B cell (primary cell): ENCODE measurements at regions of chr10 and their contacts with region 1.

Region 1: GRCh38 chr10:44974628-44975431 is 3.8 kb downstream of the DEPP1 start:
- DNase-seq: peak; percentile 79
- ATAC-seq: peak; percentile 96
- H3K4me3 ChIP-seq: peak overlapping the region; percentile 31 to 70 (median 50)
- H3K4me3 Mint-ChIP-seq: peak overlapping the region; percentile 86
- H3K27ac ChIP-seq: no peak overlapping the region
- H3K27ac Mint-ChIP-seq: peak overlapping the region; percentile 73
- H3K4me1 ChIP-seq: peaks cover 20 to 37% of the 10 kb centered on the region in 2 donors
- H3K4me1 Mint-ChIP-seq: peaks cover 27% of the 10 kb centered on the region
- H3K27me3 ChIP-seq: peaks cover 0 to 9% (median 0%) of the 10 kb centered on the region in 4 experiments
- H3K27me3 Mint-ChIP-seq: no peaks in the 10 kb centered on the region
- CTCF ChIP-seq: peak; percentile 97

Region 2: GRCh38 chr10:43671656-43672531 is 1302.9 kb before region 1 on chr10:
- CTCF ChIA-PET with region 1: no interaction called
- POLR2A ChIA-PET with region 1: no interaction called
- intact Hi-C with region 1: loop called (anchors 2 kb)
- DNase-seq: peak; percentile 72
- ATAC-seq: peak; percentile 66
- H3K4me3 ChIP-seq: no peak overlapping the region
- H3K4me3 Mint-ChIP-seq: no peak overlapping the region
- H3K27ac ChIP-seq: no peak overlapping the region
- H3K27ac Mint-ChIP-seq: no peak overlapping the region
- H3K4me1 ChIP-seq: peaks cover 0 to 5% of the 10 kb centered on the region in 2 donors
- H3K4me1 Mint-ChIP-seq: peaks cover 2% of the 10 kb centered on the region
- H3K27me3 ChIP-seq: peaks cover 0 to 42% (median 4%) of the 10 kb centered on the region in 4 experiments
- H3K27me3 Mint-ChIP-seq: peaks cover 44% of the 10 kb centered on the region
- CTCF ChIP-seq: peak; percentile 85

Region 3: DNA sequence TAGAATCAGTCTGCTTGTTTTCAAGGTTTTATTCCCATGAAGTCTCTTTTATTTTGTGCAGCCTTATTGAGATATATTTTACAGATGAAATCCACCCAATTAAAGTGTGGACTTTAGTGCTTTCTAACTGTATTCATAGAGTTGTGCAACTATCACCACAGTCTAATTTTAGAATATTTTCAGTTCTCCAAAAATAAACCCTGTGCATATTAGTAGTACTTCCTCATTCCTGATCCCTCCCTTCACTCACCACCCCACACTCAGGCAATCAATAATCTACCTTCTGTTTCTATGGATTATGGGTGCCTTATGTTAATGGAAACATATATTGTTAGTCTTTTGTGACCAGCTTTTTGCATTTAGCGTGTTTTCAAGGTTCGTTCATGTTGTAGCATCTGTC is 249.4 kb before region 1 on chr10:
- CTCF ChIA-PET with region 1: no interaction called
- POLR2A ChIA-PET with region 1: no interaction called
- intact Hi-C with region 1: no loop called
- DNase-seq: peak; percentile 47
- ATAC-seq: no peak
- H3K4me3 ChIP-seq: peak overlapping the region in 1 of 5 experiments; percentile 30
- H3K4me3 Mint-ChIP-seq: peak overlapping the region; percentile 21
- H3K27ac ChIP-seq: no peak overlapping the region
- H3K27ac Mint-ChIP-seq: no peak overlapping the region
- H3K4me1 ChIP-seq: peaks cover 32 to 36% of the 10 kb centered on the region in 2 donors
- H3K4me1 Mint-ChIP-seq: peaks cover 39% of the 10 kb centered on the region
- H3K27me3 ChIP-seq: no peaks in the 10 kb centered on the region
- H3K27me3 Mint-ChIP-seq: peaks cover 8% of the 10 kb centered on the region
- CTCF ChIP-seq: no peak

Region 4: GRCh38 chr10:44878706-44879530 is 95.9 kb before region 1 on chr10:
- CTCF ChIA-PET with region 1: no interaction called
- POLR2A ChIA-PET with region 1: no interaction called
- intact Hi-C with region 1: loop called (anchors 5 kb)
- DNase-seq: peak; percentile 73
- ATAC-seq: no peak
- H3K4me3 ChIP-seq: peak overlapping the region; percentile 37 to 68 (median 45)
- H3K4me3 Mint-ChIP-seq: peak overlapping the region; percentile 86
- H3K27ac ChIP-seq: no peak overlapping the region
- H3K27ac Mint-ChIP-seq: no peak overlapping the region
- H3K4me1 ChIP-seq: peaks cover 8 to 16% of the 10 kb centered on the region in 2 donors
- H3K4me1 Mint-ChIP-seq: peaks cover 12% of the 10 kb centered on the region
- H3K27me3 ChIP-seq: peaks cover 0 to 16% (median 3%) of the 10 kb centered on the region in 4 experiments
- H3K27me3 Mint-ChIP-seq: peaks cover 41% of the 10 kb centered on the region
- CTCF ChIP-seq: no peak

Region 5: GRCh38 chr10:44932517-44933450 is 42.0 kb before region 1 on chr10:
- CTCF ChIA-PET with region 1: interaction called, 93 read pairs
- POLR2A ChIA-PET with region 1: interaction called, 4 read pairs
- intact Hi-C with region 1: loop called (anchors 1 kb)
- DNase-seq: peak; percentile 83
- ATAC-seq: peak; percentile 96
- H3K4me3 ChIP-seq: no peak overlapping the region
- H3K4me3 Mint-ChIP-seq: no peak overlapping the region
- H3K27ac ChIP-seq: no peak overlapping the region
- H3K27ac Mint-ChIP-seq: no peak overlapping the region
- H3K4me1 ChIP-seq: peaks cover 0 to 8% of the 10 kb centered on the region in 2 donors
- H3K4me1 Mint-ChIP-seq: no peaks in the 10 kb centered on the region
- H3K27me3 ChIP-seq: no peaks in the 10 kb centered on the region
- H3K27me3 Mint-ChIP-seq: no peaks in the 10 kb centered on the region
- CTCF ChIP-seq: peak; percentile 92

Region 6: DNA sequence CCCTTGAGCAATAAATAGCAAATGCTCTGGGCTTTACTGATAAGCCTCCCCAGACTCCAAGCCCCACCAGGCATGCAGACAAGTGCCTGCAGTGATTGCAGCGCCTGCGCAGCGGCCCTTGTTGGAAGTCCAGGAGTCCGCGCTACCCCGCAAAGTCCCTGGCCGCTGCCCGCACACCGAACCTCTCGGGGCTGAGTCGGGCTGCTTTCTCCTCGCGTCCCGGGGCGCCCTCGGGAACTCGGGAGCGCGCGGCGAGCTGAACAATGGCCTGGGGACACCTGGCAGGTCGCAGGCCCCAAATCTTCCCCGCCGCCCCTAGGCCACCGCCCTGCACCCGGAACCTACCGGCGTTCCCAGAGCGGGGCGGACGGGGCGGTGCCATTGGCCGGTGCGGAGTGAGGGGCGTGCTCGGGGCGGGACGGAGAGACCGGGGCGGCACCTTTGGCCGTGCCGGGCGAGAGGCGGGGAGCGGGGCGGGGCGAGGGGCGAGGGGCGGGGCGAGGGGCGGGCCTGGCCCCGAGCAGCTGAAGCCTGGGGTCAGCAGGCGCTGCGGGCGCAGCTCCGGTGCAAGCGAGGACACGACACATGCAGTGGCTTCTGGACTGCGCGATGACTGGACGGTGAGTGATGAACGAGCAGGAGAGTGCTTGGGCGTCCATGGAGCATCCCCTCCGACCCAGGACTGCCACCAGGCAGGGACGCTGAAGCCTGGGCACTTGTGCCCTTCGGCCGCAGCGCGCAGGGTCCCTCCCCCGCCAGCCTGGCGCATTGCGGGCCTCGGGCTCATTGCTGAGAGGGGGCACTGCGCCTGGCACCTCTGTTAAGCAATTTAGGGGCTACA is 15.4 kb before region 1 on chr10 and contains the start of gene RASSF4:
- CTCF ChIA-PET with region 1: interaction called, 24 read pairs
- POLR2A ChIA-PET with region 1: interaction called, 3 read pairs
- intact Hi-C with region 1: loop called (anchors 1 kb)
- DNase-seq: peak; percentile 90
- ATAC-seq: peak; percentile 99
- H3K4me3 ChIP-seq: peak within 1 kb of the TSS; percentile 34 to 95 (median 85)
- H3K4me3 Mint-ChIP-seq: peak within 1 kb of the TSS; percentile 91
- H3K27ac ChIP-seq: peak within 1 kb of the TSS; percentile 49 to 75
- H3K27ac Mint-ChIP-seq: peak within 1 kb of the TSS; percentile 84
- H3K4me1 ChIP-seq: peaks cover 33 to 48% of the 10 kb centered on the region in 2 donors
- H3K4me1 Mint-ChIP-seq: peaks cover 47% of the 10 kb centered on the region
- H3K27me3 ChIP-seq: peaks cover 0 to 2% (median 0%) of the 10 kb centered on the region in 4 experiments
- H3K27me3 Mint-ChIP-seq: no peaks in the 10 kb centered on the region
- CTCF ChIP-seq: no peak
- total RNA-seq, gene RASSF4: 1.4 and 2.6 TPM in 2 replicates

Region 7: DNA sequence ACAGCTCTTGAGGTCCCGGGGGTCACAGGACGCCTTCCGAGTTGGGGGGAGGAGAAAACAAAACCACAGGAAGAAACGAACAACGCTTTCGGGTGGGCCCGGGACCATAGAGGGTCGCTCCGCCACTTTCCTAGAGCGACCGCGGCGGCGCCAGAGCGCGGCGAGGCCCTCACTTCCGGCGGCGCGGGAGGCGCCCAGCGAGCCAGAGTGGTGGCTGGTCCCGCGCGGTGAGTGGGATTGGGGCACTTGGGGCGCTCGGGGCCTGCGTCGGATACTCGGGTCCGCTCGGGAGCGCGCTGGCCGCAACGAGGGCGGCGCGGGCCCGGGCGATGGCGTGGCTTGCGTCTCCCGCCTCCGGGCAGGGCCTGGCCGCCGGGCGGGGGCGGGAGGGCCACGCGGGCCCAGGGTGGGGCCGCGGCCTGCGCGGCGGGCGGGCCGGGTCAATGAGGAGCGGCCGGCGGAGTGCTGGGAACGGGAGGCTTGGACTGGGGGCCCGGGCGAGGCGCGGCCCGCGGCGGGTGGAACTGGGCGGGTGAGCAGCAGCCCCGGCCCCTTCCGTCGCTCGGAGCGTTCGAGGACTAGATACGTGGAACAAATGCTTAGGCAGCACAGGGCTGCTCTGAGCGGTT is 26.0 kb after region 1 on chr10 and contains the start of gene ZNF22:
- CTCF ChIA-PET with region 1: interaction called, 3 read pairs
- POLR2A ChIA-PET with region 1: no interaction called
- intact Hi-C with region 1: loop called (anchors 1 kb)
- DNase-seq: peak; percentile 86
- ATAC-seq: peak; percentile 80
- H3K4me3 ChIP-seq: peak within 1 kb of the TSS; percentile 55 to 72 (median 66)
- H3K4me3 Mint-ChIP-seq: peak within 1 kb of the TSS; percentile 90
- H3K27ac ChIP-seq: peak within 1 kb of the TSS; percentile 74 to 85
- H3K27ac Mint-ChIP-seq: peak within 1 kb of the TSS; percentile 93
- H3K4me1 ChIP-seq: peaks cover 16% of the 10 kb centered on the region in 2 donors
- H3K4me1 Mint-ChIP-seq: peaks cover 26% of the 10 kb centered on the region
- H3K27me3 ChIP-seq: no peaks in the 10 kb centered on the region
- H3K27me3 Mint-ChIP-seq: no peaks in the 10 kb centered on the region
- CTCF ChIP-seq: no peak
- total RNA-seq, gene ZNF22: 31.4 TPM in 2 replicates

Region 8: DNA sequence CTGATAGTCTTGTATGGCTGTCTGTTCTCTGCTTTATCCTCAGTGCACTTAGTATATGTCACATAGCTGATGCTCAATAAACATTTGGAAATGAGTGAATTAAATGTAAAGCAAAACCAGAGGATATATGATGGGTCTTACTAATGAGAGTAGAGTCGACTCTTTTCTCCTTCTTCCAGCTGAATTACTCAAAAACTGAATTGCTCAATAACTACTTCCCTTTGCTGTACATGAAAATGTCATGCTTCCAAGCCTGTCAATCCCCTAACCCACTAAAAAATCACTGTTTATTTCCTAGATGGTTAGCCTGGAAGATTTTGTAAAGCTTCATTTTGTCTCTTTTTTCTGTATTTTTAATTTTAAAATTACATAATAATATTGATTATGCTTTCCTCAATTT is 252.6 kb after region 1 on chr10:
- CTCF ChIA-PET with region 1: no interaction called
- POLR2A ChIA-PET with region 1: no interaction called
- intact Hi-C with region 1: no loop called
- DNase-seq: no peak
- ATAC-seq: no peak
- H3K4me3 ChIP-seq: no peak overlapping the region
- H3K4me3 Mint-ChIP-seq: no peak overlapping the region
- H3K27ac ChIP-seq: no peak overlapping the region
- H3K27ac Mint-ChIP-seq: no peak overlapping the region
- H3K4me1 ChIP-seq: no peaks in the 10 kb centered on the region
- H3K4me1 Mint-ChIP-seq: no peaks in the 10 kb centered on the region
- H3K27me3 ChIP-seq: peaks cover 0 to 3% (median 0%) of the 10 kb centered on the region in 4 experiments
- H3K27me3 Mint-ChIP-seq: peaks cover 12% of the 10 kb centered on the region
- CTCF ChIP-seq: no peak